B cell (primary cell): ENCODE measurements at regions of chr10 and their contacts with region 1.

Region 1: DNA sequence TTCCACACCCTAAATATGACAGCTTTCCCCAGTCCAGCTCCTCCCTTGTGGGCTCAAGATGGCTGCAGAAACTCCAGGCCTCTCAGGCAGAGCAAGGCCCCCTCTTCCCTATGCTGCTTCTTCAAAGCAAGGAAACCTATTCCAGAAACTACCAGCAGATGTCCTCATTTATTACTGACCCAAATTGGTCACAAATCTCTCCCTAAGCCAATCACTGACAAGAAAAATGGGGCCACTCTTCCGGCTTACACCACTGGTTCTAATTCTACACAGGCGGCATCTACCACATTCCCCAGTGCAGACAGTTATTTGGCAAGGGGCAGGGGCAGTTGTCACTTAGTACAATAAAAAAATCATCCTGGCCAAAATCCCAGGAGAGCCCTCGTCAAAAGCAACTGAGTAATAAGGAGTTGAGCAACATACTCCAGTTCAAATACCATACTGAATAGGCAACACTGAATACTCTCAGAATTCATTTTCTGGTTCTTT is 150.4 kb downstream of the SFMBT2 start:
- DNase-seq: peak; percentile 71
- ATAC-seq: peak; percentile 80
- H3K4me3 ChIP-seq: no peak overlapping the region
- H3K4me3 Mint-ChIP-seq: no peak overlapping the region
- H3K27ac ChIP-seq: no peak overlapping the region
- H3K27ac Mint-ChIP-seq: no peak overlapping the region
- H3K4me1 ChIP-seq: peaks cover 13 to 23% of the 10 kb centered on the region in 2 donors
- H3K4me1 Mint-ChIP-seq: peaks cover 28% of the 10 kb centered on the region
- H3K27me3 ChIP-seq: no peaks in the 10 kb centered on the region
- H3K27me3 Mint-ChIP-seq: no peaks in the 10 kb centered on the region
- CTCF ChIP-seq: peak; percentile 75

Region 2: GRCh38 chr10:6843481-6843881 is 417.0 kb before region 1 on chr10:
- CTCF ChIA-PET with region 1: no interaction called
- POLR2A ChIA-PET with region 1: no interaction called
- intact Hi-C with region 1: loop called (anchors 5 kb)
- DNase-seq: peak; percentile 15
- ATAC-seq: no peak
- H3K4me3 ChIP-seq: no peak overlapping the region
- H3K4me3 Mint-ChIP-seq: no peak overlapping the region
- H3K27ac ChIP-seq: no peak overlapping the region
- H3K27ac Mint-ChIP-seq: no peak overlapping the region
- H3K4me1 ChIP-seq: no peaks in the 10 kb centered on the region
- H3K4me1 Mint-ChIP-seq: no peaks in the 10 kb centered on the region
- H3K27me3 ChIP-seq: no peaks in the 10 kb centered on the region
- H3K27me3 Mint-ChIP-seq: peaks cover 23% of the 10 kb centered on the region
- CTCF ChIP-seq: no peak

Region 3: GRCh38 chr10:7121154-7121810 is 139.2 kb before region 1 on chr10:
- CTCF ChIA-PET with region 1: no interaction called
- POLR2A ChIA-PET with region 1: no interaction called
- intact Hi-C with region 1: loop called (anchors 5 kb)
- DNase-seq: peak; percentile 78
- ATAC-seq: peak; percentile 80
- H3K4me3 ChIP-seq: no peak overlapping the region
- H3K4me3 Mint-ChIP-seq: no peak overlapping the region
- H3K27ac ChIP-seq: no peak overlapping the region
- H3K27ac Mint-ChIP-seq: no peak overlapping the region
- H3K4me1 ChIP-seq: peaks cover 4 to 5% of the 10 kb centered on the region in 2 donors
- H3K4me1 Mint-ChIP-seq: peaks cover 5% of the 10 kb centered on the region
- H3K27me3 ChIP-seq: no peaks in the 10 kb centered on the region
- H3K27me3 Mint-ChIP-seq: peaks cover 11% of the 10 kb centered on the region
- CTCF ChIP-seq: peak; percentile 82

Region 4: GRCh38 chr10:7133278-7133677 is 127.2 kb before region 1 on chr10:
- CTCF ChIA-PET with region 1: no interaction called
- POLR2A ChIA-PET with region 1: no interaction called
- intact Hi-C with region 1: no loop called
- DNase-seq: no peak
- ATAC-seq: no peak
- H3K4me3 ChIP-seq: no peak overlapping the region
- H3K4me3 Mint-ChIP-seq: no peak overlapping the region
- H3K27ac ChIP-seq: no peak overlapping the region
- H3K27ac Mint-ChIP-seq: no peak overlapping the region
- H3K4me1 ChIP-seq: no peaks in the 10 kb centered on the region
- H3K4me1 Mint-ChIP-seq: peaks cover 2% of the 10 kb centered on the region
- H3K27me3 ChIP-seq: peaks cover 0 to 4% (median 0%) of the 10 kb centered on the region in 4 experiments
- H3K27me3 Mint-ChIP-seq: peaks cover 45% of the 10 kb centered on the region
- CTCF ChIP-seq: no peak

Region 5: DNA sequence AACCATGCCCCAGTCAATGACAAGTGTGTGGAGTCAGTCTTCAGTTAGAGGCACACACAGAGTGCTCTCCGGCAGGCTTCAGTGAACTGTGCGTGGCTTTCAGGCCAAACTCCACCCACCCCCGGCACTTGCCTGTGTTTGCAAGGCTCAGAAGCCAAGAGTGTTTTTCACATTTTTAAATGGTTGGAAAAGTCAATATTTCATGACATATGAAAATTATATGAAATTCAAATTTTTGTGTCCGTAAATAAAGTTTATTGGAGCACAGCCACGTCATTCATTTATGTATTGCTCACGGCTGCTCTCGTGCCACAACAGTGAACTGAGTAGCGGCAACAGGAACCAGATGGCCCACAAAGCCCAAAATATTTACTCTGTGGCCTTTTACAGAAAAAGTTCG is 45.7 kb after region 1 on chr10:
- CTCF ChIA-PET with region 1: no interaction called
- POLR2A ChIA-PET with region 1: no interaction called
- intact Hi-C with region 1: loop called (anchors 1 kb)
- DNase-seq: peak; percentile 67
- ATAC-seq: peak; percentile 87
- H3K4me3 ChIP-seq: peak overlapping the region in 4 of 5 experiments; percentile 7 to 42 (median 24)
- H3K4me3 Mint-ChIP-seq: peak overlapping the region; percentile 82
- H3K27ac ChIP-seq: peak overlapping the region; percentile 66 to 90
- H3K27ac Mint-ChIP-seq: peak overlapping the region; percentile 96
- H3K4me1 ChIP-seq: peaks cover 31 to 38% of the 10 kb centered on the region in 2 donors
- H3K4me1 Mint-ChIP-seq: peaks cover 51% of the 10 kb centered on the region
- H3K27me3 ChIP-seq: no peaks in the 10 kb centered on the region
- H3K27me3 Mint-ChIP-seq: no peaks in the 10 kb centered on the region
- CTCF ChIP-seq: no peak

Region 6: GRCh38 chr10:7417103-7417623 is 156.7 kb after region 1 on chr10:
- CTCF ChIA-PET with region 1: interaction called, 20 read pairs
- POLR2A ChIA-PET with region 1: no interaction called
- intact Hi-C with region 1: loop called (anchors 1 kb)
- DNase-seq: peak; percentile 66
- ATAC-seq: peak; percentile 24
- H3K4me3 ChIP-seq: no peak overlapping the region
- H3K4me3 Mint-ChIP-seq: no peak overlapping the region
- H3K27ac ChIP-seq: no peak overlapping the region
- H3K27ac Mint-ChIP-seq: no peak overlapping the region
- H3K4me1 ChIP-seq: peaks cover 5 to 9% of the 10 kb centered on the region in 2 donors
- H3K4me1 Mint-ChIP-seq: peaks cover 8% of the 10 kb centered on the region
- H3K27me3 ChIP-seq: peaks cover 0 to 9% (median 4%) of the 10 kb centered on the region in 4 experiments
- H3K27me3 Mint-ChIP-seq: peaks cover 5% of the 10 kb centered on the region
- CTCF ChIP-seq: peak; percentile 77